PC-9 (cell line): ENCODE measurements at regions of chr6 and their contacts with region 1.

Region 1: DNA sequence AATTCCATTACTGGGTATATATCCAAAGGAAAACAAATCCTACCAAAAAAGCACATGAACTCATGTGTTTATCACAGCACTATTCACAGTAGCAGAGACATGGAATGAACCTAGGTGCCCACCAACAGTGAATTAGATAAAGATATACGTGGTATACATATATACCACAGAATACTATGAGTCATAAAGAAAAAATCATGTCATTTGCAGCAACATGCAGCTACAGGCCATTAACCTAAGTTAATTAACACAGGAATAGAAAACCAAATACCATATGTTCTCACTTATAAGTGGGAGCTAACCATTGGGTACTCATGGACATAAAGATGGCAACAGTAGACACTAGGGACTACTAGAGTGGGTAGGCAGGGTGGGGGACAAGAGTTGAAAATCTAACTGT is 4.2 kb downstream of the OR2B2 start:
- DNase-seq: no peak
- H3K4me3 ChIP-seq: no peak overlapping the region
- H3K27ac ChIP-seq: no peak overlapping the region
- H3K4me1 ChIP-seq: no peaks in the 10 kb centered on the region
- H3K27me3 ChIP-seq: no peaks in the 10 kb centered on the region
- CTCF ChIP-seq: no peak

Region 2: GRCh38 chr6:27772261-27773001 is 135.6 kb before region 1 on chr6:
- CTCF ChIA-PET with region 1: no interaction called
- POLR2A ChIA-PET with region 1: no interaction called
- intact Hi-C with region 1: no loop called
- DNase-seq: peak in 1 of 2 experiments; percentile 84
- H3K4me3 ChIP-seq: no peak overlapping the region
- H3K27ac ChIP-seq: no peak overlapping the region
- H3K4me1 ChIP-seq: no peaks in the 10 kb centered on the region
- H3K27me3 ChIP-seq: no peaks in the 10 kb centered on the region
- CTCF ChIP-seq: peak; percentile 80

Region 3: GRCh38 chr6:27814660-27815424 is 93.2 kb before region 1 on chr6:
- CTCF ChIA-PET with region 1: no interaction called
- POLR2A ChIA-PET with region 1: no interaction called
- intact Hi-C with region 1: no loop called
- DNase-seq: peak; percentile 58 to 78
- H3K4me3 ChIP-seq: peak overlapping the region; percentile 61; the same call in 1 of the 2 replicates
- H3K27ac ChIP-seq: peak overlapping the region; percentile 48; the same call in 1 of the 2 replicates
- H3K4me1 ChIP-seq: peaks cover 31% of the 10 kb centered on the region
- H3K27me3 ChIP-seq: no peaks in the 10 kb centered on the region
- CTCF ChIP-seq: no peak

Region 4: GRCh38 chr6:27825025-27825793 is 82.8 kb before region 1 on chr6:
- CTCF ChIA-PET with region 1: no interaction called
- POLR2A ChIA-PET with region 1: interaction called, 12 read pairs
- intact Hi-C with region 1: no loop called
- DNase-seq: no peak
- H3K4me3 ChIP-seq: peak overlapping the region; percentile 50
- H3K27ac ChIP-seq: peak overlapping the region; percentile 51
- H3K4me1 ChIP-seq: no peaks in the 10 kb centered on the region
- H3K27me3 ChIP-seq: no peaks in the 10 kb centered on the region
- CTCF ChIP-seq: no peak

Region 5: GRCh38 chr6:27922949-27923348 is 14.9 kb after region 1 on chr6:
- CTCF ChIA-PET with region 1: no interaction called
- POLR2A ChIA-PET with region 1: interaction called, 24 read pairs
- intact Hi-C with region 1: no loop called
- DNase-seq: no peak
- H3K4me3 ChIP-seq: no peak overlapping the region
- H3K27ac ChIP-seq: no peak overlapping the region
- H3K4me1 ChIP-seq: no peaks in the 10 kb centered on the region
- H3K27me3 ChIP-seq: no peaks in the 10 kb centered on the region
- CTCF ChIP-seq: no peak

Region 6: DNA sequence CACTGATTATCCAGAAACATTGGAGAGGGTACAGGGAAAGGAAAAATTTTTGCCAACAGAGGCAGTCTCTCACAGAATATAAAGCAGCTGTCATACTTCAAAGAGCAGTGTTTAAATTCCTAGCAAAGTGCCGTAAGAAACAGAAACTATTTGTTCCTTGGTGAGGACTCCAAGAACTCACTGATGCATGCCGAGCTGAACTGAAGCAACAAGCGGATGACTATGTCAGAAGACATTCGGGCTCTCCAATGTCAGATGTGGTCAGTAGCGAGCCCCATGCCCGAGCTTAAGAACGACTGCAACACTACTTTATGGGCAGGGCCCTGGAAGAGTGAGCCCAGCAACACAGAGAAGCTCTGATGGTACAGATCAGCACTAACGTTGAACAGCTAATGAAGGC is 103.7 kb after region 1 on chr6:
- CTCF ChIA-PET with region 1: no interaction called
- POLR2A ChIA-PET with region 1: no interaction called
- intact Hi-C with region 1: no loop called
- DNase-seq: no peak
- H3K4me3 ChIP-seq: no peak overlapping the region
- H3K27ac ChIP-seq: no peak overlapping the region
- H3K4me1 ChIP-seq: no peaks in the 10 kb centered on the region
- H3K27me3 ChIP-seq: no peaks in the 10 kb centered on the region; the same call in 1 of the 2 replicates
- CTCF ChIP-seq: no peak